AG04449 (cell line): ENCODE measurements at regions of chr1 and their contacts with region 1.

Region 1: GRCh38 chr1:224922404-224923164 is 6.9 kb upstream of the DNAH14 start:
- DNase-seq: no peak
- H3K4me3 ChIP-seq: no peak overlapping the region
- CTCF ChIP-seq: peak; percentile 56

Region 2: GRCh38 chr1:224906340-224906739 is 16.2 kb before region 1 on chr1:
- CTCF ChIA-PET with region 1: interaction called, 22 read pairs
- POLR2A ChIA-PET with region 1: no interaction called
- DNase-seq: no peak
- H3K4me3 ChIP-seq: no peak overlapping the region
- CTCF ChIP-seq: no peak